ENCODE measurements at regions of chr1 and their contacts with region 1.

Region 1: DNA sequence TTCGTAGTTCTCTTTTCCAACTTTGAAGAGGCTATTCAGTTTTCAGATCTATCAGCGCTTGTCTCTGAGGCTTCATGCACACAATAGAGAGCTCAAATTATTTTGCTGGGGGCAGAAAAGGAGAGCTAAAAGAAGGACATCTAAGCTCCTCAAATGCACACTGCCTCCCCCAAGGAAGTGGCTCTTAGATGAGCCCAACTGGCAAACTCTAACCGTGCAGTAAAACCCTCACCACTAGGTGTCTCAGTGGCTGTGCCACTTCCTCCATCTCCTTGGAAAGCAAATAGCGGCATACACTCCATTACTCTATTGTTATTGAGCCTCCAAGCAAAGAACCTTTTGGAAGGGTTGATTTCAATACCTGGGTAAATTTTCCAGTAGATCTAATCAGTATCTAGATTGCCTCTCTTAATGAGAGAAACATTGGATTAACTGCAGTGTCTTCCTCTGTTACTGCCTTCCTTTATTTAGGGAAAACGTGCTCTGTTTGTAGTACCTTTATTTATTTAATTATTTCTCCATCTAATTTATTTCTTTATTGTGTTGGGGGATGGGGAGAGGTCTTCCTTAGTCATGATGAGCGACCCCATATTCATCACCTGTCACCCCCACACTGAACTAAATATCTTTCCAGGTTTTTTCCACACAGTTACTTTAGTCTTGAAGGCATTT is 9.2 kb upstream of the SFPQ start:
- DNase-seq: peak; percentile 90
- H3K4me3 ChIP-seq: no peak overlapping the region
- H3K27ac ChIP-seq: no peak overlapping the region
- H3K4me1 ChIP-seq: no peaks in the 10 kb centered on the region
- H3K27me3 ChIP-seq: peaks cover 0 to 2% of the 10 kb centered on the region in 2 experiments
- CTCF ChIP-seq: peak; percentile 83 to 86
- POLR2A ChIP-seq: no peak

Region 2: DNA sequence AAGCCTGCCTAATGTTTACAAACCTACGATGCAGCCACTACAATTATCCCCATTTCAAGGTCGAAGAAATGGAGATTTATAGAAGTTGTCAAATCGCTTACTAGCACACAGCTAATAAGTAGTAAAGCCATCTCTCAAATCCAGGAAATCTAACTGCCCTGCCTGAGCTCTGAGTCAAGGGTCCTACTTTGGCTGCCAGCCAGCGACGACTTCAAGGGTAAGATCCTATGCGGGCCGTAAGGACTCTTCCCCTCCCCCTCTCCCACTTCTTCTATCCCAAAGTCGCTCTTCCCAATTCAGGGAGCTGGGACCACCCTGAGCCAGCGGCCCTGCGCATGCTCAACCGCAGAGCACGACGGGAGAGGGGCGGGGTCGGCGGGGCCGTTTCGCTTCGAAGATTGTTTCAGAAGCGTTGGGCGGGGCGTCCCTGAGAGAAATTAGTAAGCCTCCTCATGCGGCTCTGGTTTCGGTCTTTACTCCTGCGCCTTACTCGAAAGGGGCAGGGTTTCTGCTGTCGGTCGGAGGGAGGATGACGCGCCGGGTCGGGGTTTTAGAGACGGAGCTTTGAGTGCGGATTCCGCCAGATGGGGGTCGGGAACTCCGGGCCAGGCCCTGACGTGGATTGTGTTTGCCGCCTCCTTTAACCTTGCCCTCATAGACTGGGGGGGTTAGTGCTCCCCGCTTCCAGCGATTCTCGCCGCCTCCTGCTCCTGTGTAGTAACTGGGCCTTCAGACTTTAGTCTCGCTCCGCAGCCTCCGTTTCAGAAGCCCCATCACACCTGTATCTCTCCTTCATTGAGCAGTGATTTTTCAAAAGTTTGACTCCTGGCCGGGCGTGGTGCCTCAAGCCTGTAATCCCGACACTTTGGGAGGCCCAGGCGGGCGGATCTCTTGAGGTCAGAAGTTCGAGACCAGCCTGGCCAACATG is 122.9 kb before region 1 on chr1 and contains the start of gene ZMYM1:
- CTCF ChIA-PET with region 1: no interaction called
- POLR2A ChIA-PET with region 1: no interaction called
- dilution Hi-C with region 1: no loop called
- intact Hi-C with region 1: no loop called
- DNase-seq: peak; percentile 95
- H3K4me3 ChIP-seq: peak within 1 kb of the TSS; percentile 41 to 78 (median 74)
- H3K27ac ChIP-seq: peak within 1 kb of the TSS; percentile 60
- H3K4me1 ChIP-seq: peaks cover 12% of the 10 kb centered on the region
- H3K27me3 ChIP-seq: no peaks in the 10 kb centered on the region
- CTCF ChIP-seq: no peak
- POLR2A ChIP-seq: peak; percentile 84
- total RNA-seq, gene ZMYM1: 20.7 and 21.4 TPM in 2 replicates

Region 3: DNA sequence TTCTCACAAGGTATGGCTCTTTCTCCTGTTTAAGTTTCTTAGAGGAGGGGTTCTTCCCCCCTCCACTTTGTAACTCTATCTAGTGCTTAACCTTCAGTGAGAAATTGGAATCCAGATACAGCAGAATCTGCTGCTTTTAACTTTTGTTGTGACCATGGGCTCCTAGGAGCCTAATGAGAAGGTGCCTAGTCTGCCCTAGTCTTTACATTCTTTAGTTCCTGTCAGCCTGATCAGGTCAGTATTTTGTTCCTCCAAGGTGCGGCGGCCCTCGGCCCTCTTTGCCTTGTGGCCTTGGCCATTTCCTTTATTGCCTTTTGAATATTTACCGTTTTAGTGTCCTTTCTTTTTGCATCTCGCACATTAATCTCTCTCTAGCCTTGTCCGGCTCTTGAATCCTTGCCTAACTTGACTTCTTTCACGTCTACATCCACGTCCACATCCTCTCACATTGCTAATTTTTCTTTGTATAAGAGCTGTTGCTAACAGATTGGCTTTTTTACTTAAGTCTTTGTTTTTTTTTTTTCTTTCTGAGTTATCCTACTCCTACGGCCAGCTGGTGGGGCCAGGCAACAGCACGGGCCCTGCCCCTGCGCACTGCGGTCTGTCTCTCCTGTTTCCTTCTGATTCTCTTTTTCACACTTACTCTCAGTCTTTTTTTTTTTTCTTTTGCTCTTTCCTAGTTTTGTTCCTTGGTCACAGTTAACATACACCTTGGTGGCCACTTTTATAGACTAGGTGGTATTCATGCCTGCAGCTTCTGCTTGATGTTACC is 58.3 kb before region 1 on chr1:
- CTCF ChIA-PET with region 1: no interaction called
- POLR2A ChIA-PET with region 1: no interaction called
- dilution Hi-C with region 1: no loop called
- intact Hi-C with region 1: no loop called
- DNase-seq: no peak
- H3K4me3 ChIP-seq: no peak overlapping the region
- H3K27ac ChIP-seq: no peak overlapping the region
- H3K4me1 ChIP-seq: no peaks in the 10 kb centered on the region
- H3K27me3 ChIP-seq: no peaks in the 10 kb centered on the region
- CTCF ChIP-seq: no peak
- POLR2A ChIP-seq: no peak

Region 4: GRCh38 chr1:35253941-35254340 is 51.8 kb after region 1 on chr1:
- CTCF ChIA-PET with region 1: no interaction called
- POLR2A ChIA-PET with region 1: no interaction called
- dilution Hi-C with region 1: no loop called
- intact Hi-C with region 1: loop called (anchors 5 kb)
- DNase-seq: no peak
- H3K4me3 ChIP-seq: no peak overlapping the region
- H3K27ac ChIP-seq: no peak overlapping the region
- H3K4me1 ChIP-seq: no peaks in the 10 kb centered on the region
- H3K27me3 ChIP-seq: no peaks in the 10 kb centered on the region
- CTCF ChIP-seq: no peak
- POLR2A ChIP-seq: no peak

Region 5: DNA sequence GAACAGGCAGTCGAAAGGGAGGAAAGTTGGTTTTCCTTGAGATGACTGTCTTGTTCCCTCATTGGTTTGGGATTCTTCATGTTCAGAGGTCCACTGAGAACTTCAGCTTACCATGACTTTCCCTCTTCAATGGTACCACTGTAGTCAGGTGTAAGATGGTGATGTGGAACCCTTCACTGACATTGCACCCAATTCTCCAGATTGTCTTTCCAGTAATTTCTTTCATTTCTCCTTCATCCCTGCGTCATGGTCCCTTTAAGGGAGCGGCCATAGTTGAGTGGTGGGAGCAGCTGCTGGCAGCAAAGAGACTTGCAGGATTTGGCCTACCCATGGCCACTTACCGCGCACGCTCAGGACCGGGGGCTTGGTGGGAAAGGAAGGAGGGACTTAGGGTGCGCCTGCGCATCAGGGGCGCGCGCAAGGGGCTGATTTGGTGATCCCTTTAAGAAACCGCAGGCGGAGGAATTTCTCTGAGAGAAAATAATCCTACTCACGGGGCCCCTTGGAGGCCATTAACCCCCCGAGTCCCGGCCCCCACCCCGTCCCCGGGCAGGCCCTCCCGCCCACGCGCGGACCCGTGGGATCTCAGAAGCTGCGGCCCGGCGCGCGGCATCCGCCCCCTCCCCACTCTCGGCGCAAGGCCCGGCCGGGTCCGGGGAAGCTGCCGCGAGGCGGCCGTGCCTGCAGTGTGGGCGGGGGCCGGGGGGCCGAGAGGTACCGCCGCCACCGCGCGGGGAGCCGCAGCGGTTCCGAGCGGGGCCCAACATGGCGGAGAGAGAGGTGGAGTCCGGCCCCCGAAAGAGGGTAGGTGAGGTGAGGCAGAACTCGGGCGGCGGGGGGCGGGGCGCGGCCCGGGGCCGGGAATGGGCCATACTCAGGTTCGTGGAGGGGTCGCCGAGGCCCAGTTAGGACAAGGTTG is 66.4 kb after region 1 on chr1 and contains the start of gene ZMYM4:
- CTCF ChIA-PET with region 1: interaction called, 5 read pairs
- POLR2A ChIA-PET with region 1: no interaction called
- dilution Hi-C with region 1: no loop called
- intact Hi-C with region 1: loop called (anchors 2 kb)
- DNase-seq: peak; percentile 98
- H3K4me3 ChIP-seq: peak within 1 kb of the TSS; percentile 61 to 99 (median 84)
- H3K27ac ChIP-seq: peak within 1 kb of the TSS; percentile 47
- H3K4me1 ChIP-seq: peaks cover 5% of the 10 kb centered on the region
- H3K27me3 ChIP-seq: peaks cover 0 to 2% of the 10 kb centered on the region in 2 experiments
- CTCF ChIP-seq: no peak
- POLR2A ChIP-seq: no peak
- total RNA-seq, gene ZMYM4: 61.2 and 65.0 TPM in 2 replicates

Region 6: GRCh38 chr1:35298464-35298863 is 96.3 kb after region 1 on chr1:
- CTCF ChIA-PET with region 1: interaction called, 15 read pairs
- POLR2A ChIA-PET with region 1: no interaction called
- dilution Hi-C with region 1: no loop called
- intact Hi-C with region 1: loop called (anchors 1 kb)
- DNase-seq: peak; percentile 60
- H3K4me3 ChIP-seq: no peak overlapping the region
- H3K27ac ChIP-seq: no peak overlapping the region
- H3K4me1 ChIP-seq: no peaks in the 10 kb centered on the region
- H3K27me3 ChIP-seq: no peaks in the 10 kb centered on the region
- CTCF ChIP-seq: peak; percentile 25 to 40
- POLR2A ChIP-seq: no peak

Region 7: GRCh38 chr1:35334485-35334884 is 132.3 kb after region 1 on chr1:
- CTCF ChIA-PET with region 1: no interaction called
- POLR2A ChIA-PET with region 1: no interaction called
- dilution Hi-C with region 1: no loop called
- intact Hi-C with region 1: no loop called
- DNase-seq: no peak
- H3K4me3 ChIP-seq: no peak overlapping the region
- H3K27ac ChIP-seq: no peak overlapping the region
- H3K4me1 ChIP-seq: no peaks in the 10 kb centered on the region
- H3K27me3 ChIP-seq: no peaks in the 10 kb centered on the region
- CTCF ChIP-seq: no peak
- POLR2A ChIP-seq: no peak

Region 8: GRCh38 chr1:35369922-35370671 is 167.9 kb after region 1 on chr1:
- CTCF ChIA-PET with region 1: interaction called, 4 read pairs
- POLR2A ChIA-PET with region 1: no interaction called
- dilution Hi-C with region 1: no loop called
- intact Hi-C with region 1: loop called (anchors 10 kb)
- DNase-seq: peak; percentile 94
- H3K4me3 ChIP-seq: no peak overlapping the region
- H3K27ac ChIP-seq: peak overlapping the region; percentile 43
- H3K4me1 ChIP-seq: peaks cover 12% of the 10 kb centered on the region
- H3K27me3 ChIP-seq: no peaks in the 10 kb centered on the region
- CTCF ChIP-seq: no peak
- POLR2A ChIP-seq: no peak

Region 9: GRCh38 chr1:35443768-35444518 is 241.8 kb after region 1 on chr1:
- CTCF ChIA-PET with region 1: interaction called, 17 read pairs
- POLR2A ChIA-PET with region 1: no interaction called
- dilution Hi-C with region 1: no loop called
- intact Hi-C with region 1: loop called (anchors 1 kb)
- DNase-seq: no peak
- H3K4me3 ChIP-seq: no peak overlapping the region
- H3K27ac ChIP-seq: no peak overlapping the region
- H3K4me1 ChIP-seq: peaks cover 7% of the 10 kb centered on the region
- H3K27me3 ChIP-seq: no peaks in the 10 kb centered on the region
- CTCF ChIP-seq: no peak
- POLR2A ChIP-seq: no peak